ENCODE measurements at regions of chr6 and their contacts with region 1.

Region 1: GRCh38 chr6:47413752-47414422 is 63.7 kb upstream of the CD2AP start:
- DNase-seq: peak; percentile 34
- H3K4me3 Mint-ChIP-seq: peak overlapping the region; percentile 73
- H3K27ac Mint-ChIP-seq: peak overlapping the region; percentile 75
- H3K4me1 Mint-ChIP-seq: peaks cover 20% of the 10 kb centered on the region
- H3K27me3 Mint-ChIP-seq: peaks cover 20% of the 10 kb centered on the region

Region 2: DNA sequence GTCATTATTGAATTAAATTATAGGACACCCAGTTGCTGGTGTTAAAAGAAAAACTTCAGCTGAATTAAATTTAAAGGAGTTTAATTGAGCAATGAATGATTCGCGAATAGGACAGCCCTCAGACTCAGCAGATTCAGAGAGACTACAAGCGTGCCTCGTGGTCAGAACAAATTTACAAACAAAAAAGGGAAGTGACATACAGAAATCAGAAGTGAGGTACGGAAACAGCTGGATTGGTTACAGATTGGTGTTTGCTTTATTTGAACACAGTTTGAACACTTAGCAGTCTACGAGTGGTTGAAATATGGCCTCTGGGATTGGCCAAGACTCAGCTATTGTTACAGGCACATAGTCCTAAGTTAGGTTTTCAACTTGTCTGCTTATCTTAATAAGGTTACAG is 78.4 kb before region 1 on chr6:
- CTCF ChIA-PET with region 1: no interaction called
- POLR2A ChIA-PET with region 1: no interaction called
- DNase-seq: no peak
- H3K4me3 Mint-ChIP-seq: no peak overlapping the region
- H3K27ac Mint-ChIP-seq: no peak overlapping the region
- H3K4me1 Mint-ChIP-seq: no peaks in the 10 kb centered on the region
- H3K27me3 Mint-ChIP-seq: peaks cover 9% of the 10 kb centered on the region

Region 3: DNA sequence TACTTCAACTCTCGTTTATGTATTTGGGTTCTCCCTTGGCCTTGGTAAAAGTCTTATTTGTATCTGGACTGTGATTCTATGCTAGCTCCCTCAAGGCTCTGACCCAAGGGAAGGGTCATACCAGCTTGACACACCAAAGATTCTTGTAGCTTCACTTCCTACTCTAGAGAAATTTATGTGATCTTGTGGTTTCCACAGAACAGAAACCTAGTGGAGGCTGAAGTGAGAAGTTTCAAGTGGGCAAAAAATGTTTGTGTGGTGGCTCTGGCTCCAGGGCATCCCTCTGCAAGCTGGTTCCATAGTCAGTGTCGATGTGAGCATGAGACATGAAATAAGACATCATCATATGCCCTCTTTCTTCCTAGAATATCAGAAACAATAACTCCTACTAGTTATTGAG is 56.1 kb before region 1 on chr6:
- CTCF ChIA-PET with region 1: no interaction called
- POLR2A ChIA-PET with region 1: no interaction called
- DNase-seq: no peak
- H3K4me3 Mint-ChIP-seq: no peak overlapping the region
- H3K27ac Mint-ChIP-seq: no peak overlapping the region
- H3K4me1 Mint-ChIP-seq: no peaks in the 10 kb centered on the region
- H3K27me3 Mint-ChIP-seq: peaks cover 20% of the 10 kb centered on the region

Region 4: GRCh38 chr6:47477497-47478232 is 63.8 kb after region 1 on chr6 and contains the start of gene CD2AP:
- CTCF ChIA-PET with region 1: interaction called, 4 read pairs
- POLR2A ChIA-PET with region 1: interaction called, 50 read pairs
- DNase-seq: peak; percentile 89
- H3K4me3 Mint-ChIP-seq: peak within 1 kb of the TSS; percentile 99
- H3K27ac Mint-ChIP-seq: peak within 1 kb of the TSS; percentile 97
- H3K4me1 Mint-ChIP-seq: peaks cover 32% of the 10 kb centered on the region
- H3K27me3 Mint-ChIP-seq: peaks cover 6% of the 10 kb centered on the region
- total RNA-seq, gene CD2AP: 26.3 to 27.1 TPM

Region 5: DNA sequence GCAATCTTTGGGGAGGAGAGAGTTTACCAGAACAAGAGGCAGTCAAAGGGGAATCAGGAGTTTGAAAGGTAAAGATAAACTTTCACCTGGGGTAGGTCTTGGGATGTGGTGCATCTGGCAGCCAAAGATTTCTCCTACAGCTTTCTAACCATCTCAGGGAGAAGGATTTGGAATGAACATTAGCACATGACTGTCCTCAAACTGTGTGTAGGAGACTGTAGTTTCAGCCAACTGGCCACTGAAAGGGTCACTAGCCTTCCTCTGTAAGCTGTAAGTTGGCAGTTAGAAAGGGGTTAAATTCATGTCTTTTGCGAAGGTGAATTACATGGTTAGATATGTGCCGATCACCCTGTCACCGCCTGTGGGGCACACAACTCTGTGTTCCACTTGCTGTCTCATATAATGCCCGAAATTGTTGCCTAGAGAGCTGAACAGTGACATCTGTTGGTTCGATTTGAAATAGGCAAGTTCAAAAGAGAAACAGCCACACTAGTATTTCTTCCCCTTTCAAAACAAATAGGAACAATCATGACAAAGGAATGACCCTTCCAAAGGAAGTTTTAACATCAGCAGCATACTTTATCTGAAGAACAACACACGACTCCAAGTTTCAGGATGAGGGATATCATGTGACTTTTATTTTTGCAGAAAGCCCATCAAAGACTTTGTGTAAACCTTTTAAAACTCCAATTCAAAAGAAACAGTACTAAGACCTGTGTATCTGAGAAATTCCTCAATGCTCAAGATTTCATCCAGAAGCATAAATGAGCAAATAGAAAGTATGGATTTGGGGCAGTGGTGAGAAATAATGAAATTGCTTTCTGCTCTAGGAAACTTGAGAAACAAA is 366.8 kb after region 1 on chr6:
- CTCF ChIA-PET with region 1: interaction called, 28 read pairs
- POLR2A ChIA-PET with region 1: no interaction called
- DNase-seq: peak; percentile 34
- H3K4me3 Mint-ChIP-seq: no peak overlapping the region
- H3K27ac Mint-ChIP-seq: no peak overlapping the region
- H3K4me1 Mint-ChIP-seq: peaks cover 3% of the 10 kb centered on the region
- H3K27me3 Mint-ChIP-seq: peaks cover 25% of the 10 kb centered on the region

Measured in activated CD4-positive, alpha-beta memory T cell treated with anti-CD3 and anti-CD28 coated beads, Interleukin-2, amount 10 ng/mL, durations not matched to agents 7 days and 5 days (primary cell).